OCI-LY7 (cell line): ENCODE measurements at regions of chr1 and their contacts with region 1.

Region 1: GRCh38 chr1:69315854-69316304 is 251.8 kb upstream of the LRRC7 start:
- DNase-seq: no peak
- H3K4me3 ChIP-seq: no peak overlapping the region
- H3K27ac ChIP-seq: no peak overlapping the region
- H3K4me1 ChIP-seq: peaks cover 18% of the 10 kb centered on the region
- CTCF ChIP-seq: no peak

Region 2: GRCh38 chr1:68136186-68136585 is 1179.7 kb before region 1 on chr1:
- CTCF ChIA-PET with region 1: no interaction called
- POLR2A ChIA-PET with region 1: no interaction called
- intact Hi-C with region 1: loop called (anchors 10 kb)
- DNase-seq: no peak
- H3K4me3 ChIP-seq: no peak overlapping the region
- H3K27ac ChIP-seq: no peak overlapping the region
- H3K4me1 ChIP-seq: no peaks in the 10 kb centered on the region
- CTCF ChIP-seq: no peak

Region 3: GRCh38 chr1:69914976-69915765 is 599.3 kb after region 1 on chr1:
- CTCF ChIA-PET with region 1: no interaction called
- POLR2A ChIA-PET with region 1: no interaction called
- intact Hi-C with region 1: no loop called
- DNase-seq: no peak
- H3K4me3 ChIP-seq: no peak overlapping the region
- H3K27ac ChIP-seq: no peak overlapping the region
- H3K4me1 ChIP-seq: no peaks in the 10 kb centered on the region
- CTCF ChIP-seq: no peak